ENCODE measurements at regions of chr4 and their contacts with region 1.

Region 1: DNA sequence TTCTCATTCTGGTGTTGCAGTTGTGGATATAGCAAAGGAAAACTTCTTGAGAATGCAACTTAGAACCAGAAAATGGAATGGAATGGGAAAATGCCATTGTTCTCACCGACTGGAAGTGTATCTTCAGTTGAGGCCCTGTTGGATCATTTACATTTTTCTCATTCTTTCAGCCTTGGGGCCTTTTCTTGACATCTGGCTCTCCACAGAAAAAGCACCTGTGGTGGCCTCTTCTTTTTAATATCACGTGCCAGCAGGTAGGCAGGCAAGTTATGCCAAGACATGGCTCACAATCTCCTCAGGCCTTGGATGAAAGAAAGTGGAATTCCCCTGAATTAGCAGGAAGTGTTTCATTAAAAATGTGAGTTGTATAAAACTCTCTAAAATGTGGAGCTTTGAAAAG is 122.0 kb downstream of the FRAS1 start:
- DNase-seq: no peak
- H3K4me3 ChIP-seq: no peak overlapping the region
- H3K27ac ChIP-seq: no peak overlapping the region
- H3K4me1 ChIP-seq: peaks cover 0 to 8% (median 3%) of the 10 kb centered on the region in 4 donors
- H3K27me3 ChIP-seq: no peaks in the 10 kb centered on the region
- CTCF ChIP-seq: no peak
- EP300 ChIP-seq: no peak
- POLR2A ChIP-seq: no peak

Region 2: GRCh38 chr4:78155616-78156105 is 23.5 kb before region 1 on chr4:
- in situ Hi-C with region 1: no loop called
- intact Hi-C with region 1: no loop called
- DNase-seq: no peak
- H3K4me3 ChIP-seq: no peak overlapping the region
- H3K27ac ChIP-seq: no peak overlapping the region
- H3K4me1 ChIP-seq: peaks cover 0 to 2% (median under 1%) of the 10 kb centered on the region in 4 donors
- H3K27me3 ChIP-seq: no peaks in the 10 kb centered on the region
- CTCF ChIP-seq: no peak
- EP300 ChIP-seq: no peak
- POLR2A ChIP-seq: no peak

Region 3: GRCh38 chr4:78242071-78242470 is 62.9 kb after region 1 on chr4:
- in situ Hi-C with region 1: no loop called
- intact Hi-C with region 1: loop called (anchors 2 kb)
- DNase-seq: no peak
- H3K4me3 ChIP-seq: no peak overlapping the region
- H3K27ac ChIP-seq: no peak overlapping the region
- H3K4me1 ChIP-seq: no peaks in the 10 kb centered on the region
- H3K27me3 ChIP-seq: no peaks in the 10 kb centered on the region
- CTCF ChIP-seq: no peak
- EP300 ChIP-seq: no peak
- POLR2A ChIP-seq: no peak